Mammary epithelial cell (primary cell): ENCODE measurements at regions of chr9 and their contacts with region 1.

Region 1: GRCh38 chr9:114551883-114552685 is 35.5 kb upstream of the ATP6V1G1 start:
- DNase-seq: peak; percentile 99
- H3K4me3 ChIP-seq: no peak overlapping the region
- H3K27ac ChIP-seq: peak overlapping the region; percentile 96
- H3K4me1 ChIP-seq: peaks cover 22% of the 10 kb centered on the region
- H3K27me3 ChIP-seq: no peaks in the 10 kb centered on the region
- CTCF ChIP-seq: no peak

Region 2: GRCh38 chr9:114487607-114488300 is 64.3 kb before region 1 on chr9:
- CTCF ChIA-PET with region 1: no interaction called
- dilution Hi-C with region 1: no loop called
- in situ Hi-C with region 1: no loop called
- intact Hi-C with region 1: loop called (anchors 5 kb)
- DNase-seq: peak; percentile 66
- H3K4me3 ChIP-seq: no peak overlapping the region
- H3K27ac ChIP-seq: no peak overlapping the region
- H3K4me1 ChIP-seq: peaks cover 17% of the 10 kb centered on the region
- H3K27me3 ChIP-seq: no peaks in the 10 kb centered on the region
- CTCF ChIP-seq: peak; percentile 89 to 96

Region 3: GRCh38 chr9:114505187-114506081 is 46.6 kb before region 1 on chr9 and contains the start of gene WHRN:
- CTCF ChIA-PET with region 1: no interaction called
- dilution Hi-C with region 1: no loop called
- in situ Hi-C with region 1: no loop called
- intact Hi-C with region 1: loop called (anchors 2 kb)
- DNase-seq: peak; percentile 88
- H3K4me3 ChIP-seq: peak within 1 kb of the TSS; percentile 64 to 79 (median 67)
- H3K27ac ChIP-seq: peak within 1 kb of the TSS; percentile 81
- H3K4me1 ChIP-seq: peaks cover 32% of the 10 kb centered on the region
- H3K27me3 ChIP-seq: no peaks in the 10 kb centered on the region
- CTCF ChIP-seq: no peak
- total RNA-seq, gene WHRN: 3.2 to 9.7 TPM

Region 4: GRCh38 chr9:114621975-114622609 is 70.0 kb after region 1 on chr9:
- CTCF ChIA-PET with region 1: no interaction called
- dilution Hi-C with region 1: loop called (anchors 5 kb)
- in situ Hi-C with region 1: no loop called
- intact Hi-C with region 1: no loop called
- DNase-seq: peak; percentile 60
- H3K4me3 ChIP-seq: no peak overlapping the region
- H3K27ac ChIP-seq: no peak overlapping the region
- H3K4me1 ChIP-seq: peaks cover 9% of the 10 kb centered on the region
- H3K27me3 ChIP-seq: no peaks in the 10 kb centered on the region
- CTCF ChIP-seq: no peak

Region 5: GRCh38 chr9:115328228-115328627 is 776.1 kb after region 1 on chr9:
- CTCF ChIA-PET with region 1: no interaction called
- dilution Hi-C with region 1: no loop called
- in situ Hi-C with region 1: no loop called
- intact Hi-C with region 1: no loop called
- DNase-seq: no peak
- H3K4me3 ChIP-seq: no peak overlapping the region
- H3K27ac ChIP-seq: no peak overlapping the region
- H3K4me1 ChIP-seq: no peaks in the 10 kb centered on the region
- H3K27me3 ChIP-seq: no peaks in the 10 kb centered on the region
- CTCF ChIP-seq: no peak